Activated naive CD4-positive, alpha-beta T cell treated with anti-CD3 and anti-CD28 coated beads for 36 hours (primary cell): ENCODE measurements at regions of chr15 and their contacts with region 1.

Region 1: GRCh38 chr15:44663409-44664308 is at the start of gene SPG11:
- DNase-seq: peak; percentile 99
- H3K4me3 Mint-ChIP-seq: peak within 1 kb of the TSS; percentile 97
- H3K27ac Mint-ChIP-seq: peak within 1 kb of the TSS; percentile 94
- H3K4me1 Mint-ChIP-seq: peaks cover 53% of the 10 kb centered on the region
- H3K27me3 Mint-ChIP-seq: no peaks in the 10 kb centered on the region
- total RNA-seq, gene SPG11: 83.2 to 96.4 TPM

Region 2: DNA sequence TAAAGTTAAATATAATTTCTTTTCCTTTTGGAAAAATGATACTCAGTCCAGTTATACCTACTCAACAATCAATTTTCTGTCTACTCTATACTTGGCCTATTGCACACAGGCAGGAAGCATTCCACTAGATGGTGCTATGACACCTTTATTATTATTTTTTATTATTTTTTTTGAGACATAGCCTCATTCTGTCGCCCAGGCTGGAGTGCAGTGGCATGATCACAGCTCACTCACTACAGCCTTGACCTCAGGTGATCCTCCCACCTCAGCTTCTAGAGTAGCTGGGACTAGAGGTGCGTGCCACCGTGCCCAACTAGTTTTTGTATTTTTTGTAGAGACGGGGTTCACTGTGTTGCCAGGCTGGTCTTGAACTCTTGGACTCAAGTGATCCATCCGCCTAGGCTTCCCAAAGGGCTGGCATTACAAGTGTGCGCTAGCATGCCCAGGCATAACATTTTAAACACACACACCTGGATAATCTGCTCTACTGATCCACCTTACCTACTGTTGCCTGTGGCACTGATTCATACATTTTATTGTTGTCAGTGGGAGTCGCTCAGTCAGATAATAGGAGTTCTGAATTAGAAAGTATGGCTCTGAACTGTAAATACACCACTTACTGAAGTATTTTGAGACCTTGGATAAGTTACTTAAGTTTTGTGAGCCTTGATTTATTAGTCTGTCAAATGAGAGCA is 70.5 kb before region 1 on chr15:
- CTCF ChIA-PET with region 1: interaction called, 8 read pairs
- intact Hi-C with region 1: loop called (anchors 1 kb)
- DNase-seq: peak; percentile 31
- H3K4me3 Mint-ChIP-seq: no peak overlapping the region
- H3K27ac Mint-ChIP-seq: no peak overlapping the region
- H3K4me1 Mint-ChIP-seq: peaks cover 22% of the 10 kb centered on the region
- H3K27me3 Mint-ChIP-seq: no peaks in the 10 kb centered on the region

Region 3: GRCh38 chr15:44676676-44677075 is 13.0 kb after region 1 on chr15:
- CTCF ChIA-PET with region 1: interaction called, 29 read pairs
- intact Hi-C with region 1: loop called (anchors 1 kb)
- DNase-seq: peak; percentile 66
- H3K4me3 Mint-ChIP-seq: peak overlapping the region; percentile 55
- H3K27ac Mint-ChIP-seq: peak overlapping the region; percentile 86
- H3K4me1 Mint-ChIP-seq: peaks cover 81% of the 10 kb centered on the region
- H3K27me3 Mint-ChIP-seq: no peaks in the 10 kb centered on the region

Region 4: GRCh38 chr15:44694416-44694815 is 30.8 kb after region 1 on chr15:
- CTCF ChIA-PET with region 1: interaction called, 10 read pairs
- intact Hi-C with region 1: no loop called
- DNase-seq: no peak
- H3K4me3 Mint-ChIP-seq: no peak overlapping the region
- H3K27ac Mint-ChIP-seq: no peak overlapping the region
- H3K4me1 Mint-ChIP-seq: peaks cover 19% of the 10 kb centered on the region
- H3K27me3 Mint-ChIP-seq: no peaks in the 10 kb centered on the region

Region 5: GRCh38 chr15:44728576-44729407 is 65.1 kb after region 1 on chr15:
- CTCF ChIA-PET with region 1: interaction called, 31 read pairs
- intact Hi-C with region 1: loop called (anchors 1 kb)
- DNase-seq: peak; percentile 97
- H3K4me3 Mint-ChIP-seq: peak overlapping the region; percentile 97
- H3K27ac Mint-ChIP-seq: peak overlapping the region; percentile 99
- H3K4me1 Mint-ChIP-seq: peaks cover 69% of the 10 kb centered on the region
- H3K27me3 Mint-ChIP-seq: no peaks in the 10 kb centered on the region

Region 6: GRCh38 chr15:45022871-45023658 is 359.4 kb after region 1 on chr15 and contains the start of gene SORD:
- CTCF ChIA-PET with region 1: no interaction called
- intact Hi-C with region 1: loop called (anchors 5 kb)
- DNase-seq: peak; percentile 94
- H3K4me3 Mint-ChIP-seq: peak within 1 kb of the TSS; percentile 83
- H3K27ac Mint-ChIP-seq: peak within 1 kb of the TSS; percentile 46
- H3K4me1 Mint-ChIP-seq: peaks cover 14% of the 10 kb centered on the region
- H3K27me3 Mint-ChIP-seq: peaks cover 7% of the 10 kb centered on the region
- total RNA-seq, gene SORD: 23.1 to 23.8 TPM